HEK293T (cell line): ENCODE measurements at regions of chr12 and their contacts with region 1.

Region 1: DNA sequence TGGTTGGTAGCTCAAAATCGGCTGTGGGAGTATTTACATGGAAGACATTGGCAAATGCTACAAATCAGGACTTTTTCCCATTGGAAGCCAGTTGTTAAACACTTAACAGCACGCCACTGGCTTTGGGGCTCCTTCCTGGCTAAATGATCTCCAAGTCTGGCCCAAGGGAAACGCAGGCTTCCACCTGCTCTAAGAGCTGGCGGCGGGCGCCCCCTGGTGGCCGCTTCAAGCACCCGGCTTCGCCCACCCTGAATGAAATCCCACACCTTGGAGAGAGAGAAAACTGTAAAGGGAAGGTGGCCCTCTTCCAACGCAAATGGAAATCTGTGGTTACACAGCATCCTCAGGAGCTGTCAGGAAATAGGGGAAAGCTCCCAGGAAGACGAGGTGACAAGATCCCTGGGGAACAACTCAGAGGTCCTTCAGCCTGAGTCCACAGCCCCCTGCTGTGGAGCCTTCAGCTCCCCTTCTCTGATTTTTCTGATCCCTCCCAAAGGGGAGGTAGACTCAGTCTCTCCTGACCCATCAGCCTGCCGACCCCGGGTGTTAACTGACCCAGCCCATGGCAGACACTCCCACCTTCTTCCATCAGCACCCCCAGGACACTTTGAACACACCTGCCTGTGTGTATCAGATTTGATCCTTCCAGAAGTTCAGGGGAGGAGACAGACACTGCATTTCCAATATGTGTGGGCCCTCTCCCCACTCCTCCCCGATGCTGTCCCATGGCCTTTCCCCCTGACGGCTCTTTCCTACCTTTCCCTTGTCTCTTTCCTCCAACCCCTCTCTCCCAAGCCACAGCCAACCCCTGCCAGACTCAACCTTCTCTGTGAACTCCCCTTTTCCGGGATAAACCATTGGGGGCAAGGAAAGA is 15.4 kb downstream of the SELPLG start:
- DNase-seq: peak; percentile 85

Region 2: GRCh38 chr12:108562348-108563135 is 55.8 kb before region 1 on chr12 and contains the start of gene ISCU:
- CTCF ChIA-PET with region 1: interaction called, 4 read pairs
- POLR2A ChIA-PET with region 1: interaction called, 10 read pairs
- DNase-seq: peak; percentile 99

Region 3: DNA sequence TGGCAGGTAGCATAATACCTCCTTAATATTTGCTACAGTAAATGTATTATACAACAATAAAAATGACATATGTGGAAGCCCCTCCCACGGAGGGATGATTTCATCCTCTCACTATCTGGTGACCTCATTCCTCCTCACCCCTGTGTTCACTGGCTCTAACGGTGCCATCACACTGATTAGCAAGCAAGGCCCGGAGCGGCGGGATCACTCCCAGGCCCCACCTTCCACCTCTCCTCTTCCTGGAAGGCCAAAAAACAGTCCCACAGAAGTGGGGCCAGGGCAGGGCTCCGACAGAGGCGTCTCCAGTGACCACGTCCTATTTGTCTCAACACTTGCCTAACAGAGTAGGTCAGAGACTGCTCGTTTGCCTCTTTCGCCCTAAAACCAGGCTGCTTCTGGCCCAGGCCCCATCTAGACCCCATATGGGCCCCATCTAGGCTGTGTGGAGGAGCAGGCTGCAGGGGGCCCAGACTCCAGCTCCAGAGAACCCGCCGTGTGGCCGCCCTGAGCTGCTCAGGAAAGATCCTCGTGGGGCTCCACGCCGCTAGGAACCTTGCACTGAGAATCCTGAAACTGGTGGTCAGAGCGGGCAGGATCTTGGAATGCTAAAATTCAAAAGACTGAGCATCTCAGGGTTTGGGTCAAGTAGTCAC is 11.6 kb after region 1 on chr12:
- CTCF ChIA-PET with region 1: interaction called, 13 read pairs
- POLR2A ChIA-PET with region 1: no interaction called
- DNase-seq: peak; percentile 36

Region 4: DNA sequence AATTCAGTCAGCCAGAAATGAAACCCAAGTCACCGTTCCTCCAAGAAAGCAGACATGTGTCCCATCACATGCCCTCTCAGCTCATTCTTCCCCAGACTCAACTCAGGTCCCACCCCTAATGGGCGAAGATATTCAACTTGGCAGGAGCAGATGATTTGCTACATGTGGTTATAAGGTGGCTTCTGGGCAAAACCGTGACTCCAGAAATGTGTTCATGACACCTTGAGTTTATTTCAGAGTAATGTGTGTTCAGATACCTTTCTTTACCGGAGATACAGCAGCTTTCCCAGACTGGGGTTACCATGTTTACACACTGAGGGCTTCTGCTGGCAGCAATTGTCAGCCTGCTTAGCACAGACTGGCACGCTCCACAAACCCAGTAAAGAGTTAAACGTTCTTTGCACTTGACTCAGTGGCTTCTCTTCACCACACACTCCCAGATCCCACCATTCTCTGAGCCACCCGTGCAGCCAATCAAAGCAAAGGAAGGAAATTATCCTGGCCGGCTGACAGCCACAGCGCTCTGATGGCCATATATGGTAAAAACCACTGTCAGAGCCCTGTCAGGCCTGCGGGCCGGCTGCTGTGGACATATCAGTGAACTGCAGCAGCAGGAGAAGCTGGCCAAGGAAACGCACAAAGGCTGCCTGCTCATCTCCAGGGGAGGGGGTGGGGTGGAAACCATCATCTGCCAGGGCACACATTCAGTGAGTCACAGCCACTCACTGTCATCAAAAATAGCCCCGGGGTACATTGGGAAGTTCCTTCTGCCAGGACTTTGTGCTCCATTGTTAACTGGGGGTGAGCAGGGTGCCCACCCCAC is 73.1 kb after region 1 on chr12:
- CTCF ChIA-PET with region 1: no interaction called
- POLR2A ChIA-PET with region 1: no interaction called
- DNase-seq: peak; percentile 81